OCI-LY7 (cell line): ENCODE measurements at regions of chr11 and their contacts with region 1.

Region 1: DNA sequence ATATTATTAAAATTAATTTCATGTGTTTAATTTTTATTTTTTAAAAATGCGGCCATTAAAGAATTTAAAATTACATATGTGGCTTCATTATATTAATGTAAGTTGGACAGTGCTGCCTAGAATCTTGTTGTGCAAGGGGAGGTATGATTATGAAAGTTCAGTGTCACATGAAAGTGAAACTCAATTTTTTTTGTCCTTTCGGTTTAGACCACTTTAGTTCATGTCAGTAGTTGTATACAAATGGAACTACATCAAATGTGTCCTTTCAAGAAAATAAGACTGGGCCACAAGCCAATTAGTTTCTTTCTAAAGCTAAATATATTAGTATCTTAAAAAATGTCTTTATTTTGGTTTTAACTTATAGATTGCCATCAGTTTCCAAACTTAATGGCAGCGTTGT is 35.7 kb downstream of the TBCEL start:
- DNase-seq: no peak
- H3K4me3 ChIP-seq: no peak overlapping the region
- H3K27ac ChIP-seq: no peak overlapping the region
- H3K4me1 ChIP-seq: no peaks in the 10 kb centered on the region
- CTCF ChIP-seq: no peak

Region 2: DNA sequence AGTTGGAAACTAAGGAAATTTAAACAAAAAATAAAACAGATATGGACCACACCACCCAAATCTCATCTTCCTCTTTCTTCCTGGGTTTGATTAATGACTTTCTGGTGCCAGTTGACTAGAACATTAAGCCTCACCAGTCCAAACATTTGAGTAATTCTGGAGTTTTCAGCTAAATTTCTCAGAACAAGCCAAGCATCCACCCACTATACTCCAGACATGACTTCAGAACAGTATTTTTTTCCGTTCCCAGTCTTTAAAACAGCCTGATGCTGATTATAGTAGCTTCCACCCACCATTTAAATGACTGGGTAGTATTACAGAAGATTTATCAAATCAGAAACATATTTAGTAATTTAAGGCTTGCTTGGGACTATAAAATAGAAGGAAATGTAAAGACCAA is 1365.0 kb after region 1 on chr11:
- CTCF ChIA-PET with region 1: no interaction called
- POLR2A ChIA-PET with region 1: no interaction called
- intact Hi-C with region 1: loop called (anchors 5 kb)
- DNase-seq: no peak
- H3K4me3 ChIP-seq: no peak overlapping the region
- H3K27ac ChIP-seq: no peak overlapping the region
- H3K4me1 ChIP-seq: no peaks in the 10 kb centered on the region
- CTCF ChIP-seq: no peak